Heart right ventricle (tissue), 16 donors: ENCODE measurements at regions of chr15 and their contacts with region 1.

Region 1: DNA sequence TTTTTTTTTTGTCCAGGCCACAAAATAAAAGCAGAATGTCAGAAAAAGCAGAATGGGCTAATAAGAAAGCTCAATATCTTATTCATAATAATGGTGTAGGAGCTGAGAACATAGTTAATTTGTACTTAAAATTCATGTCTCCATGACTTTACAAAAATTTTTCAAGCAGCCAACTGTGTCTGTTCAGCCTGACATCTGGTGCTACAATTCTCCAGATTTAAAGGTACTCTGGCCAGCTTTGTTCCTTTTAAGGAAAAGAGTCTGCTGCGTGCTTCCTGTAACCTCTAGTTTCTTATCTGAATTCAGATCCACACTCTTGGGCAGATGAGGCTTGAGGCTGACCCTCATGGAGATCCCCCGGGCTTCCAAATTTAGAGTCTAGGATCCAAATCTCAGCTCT is 8.7 kb upstream of the RFX7 start:
- DNase-seq: no peak
- ATAC-seq: no peak
- H3K4me3 ChIP-seq: no peak overlapping the region
- H3K27ac ChIP-seq: no peak overlapping the region
- H3K4me1 ChIP-seq: peaks cover 0 to 10% (median 0%) of the 10 kb centered on the region in 9 donors
- H3K27me3 ChIP-seq: peaks cover 0 to 8% (median 0%) of the 10 kb centered on the region in 7 donors
- CTCF ChIP-seq: no peak

Region 2: DNA sequence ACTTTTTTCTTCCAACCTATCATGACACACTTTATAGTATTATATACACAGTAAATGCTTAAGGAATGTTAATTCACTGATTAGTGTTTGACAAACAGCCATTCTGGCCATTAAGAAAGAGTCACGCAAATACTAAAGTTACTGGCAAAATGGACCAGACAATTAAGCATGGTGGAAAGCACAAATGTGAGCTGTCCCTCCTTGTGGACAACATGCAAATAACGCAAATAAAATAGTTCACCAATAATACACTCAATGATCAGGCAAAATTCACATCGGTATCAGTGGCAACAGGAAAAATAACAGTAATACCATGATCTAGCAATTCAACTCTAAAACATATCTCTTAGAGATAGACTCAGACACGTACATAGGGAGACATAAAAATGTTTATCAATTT is 330.6 kb before region 1 on chr15:
- intact Hi-C with region 1: no loop called
- DNase-seq: no peak
- ATAC-seq: no peak
- H3K4me3 ChIP-seq: no peak overlapping the region
- H3K27ac ChIP-seq: no peak overlapping the region
- H3K4me1 ChIP-seq: peaks cover 0 to 11% (median 0%) of the 10 kb centered on the region in 9 donors
- H3K27me3 ChIP-seq: no peaks in the 10 kb centered on the region
- CTCF ChIP-seq: no peak

Region 3: GRCh38 chr15:56428821-56429458 is 176.6 kb after region 1 on chr15:
- intact Hi-C with region 1: loop called in 8 of 10 experiments (anchors 5 to 10 kb)
- DNase-seq: no peak
- ATAC-seq: no peak
- H3K4me3 ChIP-seq: no peak overlapping the region
- H3K27ac ChIP-seq: no peak overlapping the region
- H3K4me1 ChIP-seq: no peaks in the 10 kb centered on the region
- H3K27me3 ChIP-seq: no peaks in the 10 kb centered on the region
- CTCF ChIP-seq: peak in 7 of 9 donors; percentile 37 to 67 (median 54)